ENCODE measurements at regions of chr18 and their contacts with region 1.

Region 1: DNA sequence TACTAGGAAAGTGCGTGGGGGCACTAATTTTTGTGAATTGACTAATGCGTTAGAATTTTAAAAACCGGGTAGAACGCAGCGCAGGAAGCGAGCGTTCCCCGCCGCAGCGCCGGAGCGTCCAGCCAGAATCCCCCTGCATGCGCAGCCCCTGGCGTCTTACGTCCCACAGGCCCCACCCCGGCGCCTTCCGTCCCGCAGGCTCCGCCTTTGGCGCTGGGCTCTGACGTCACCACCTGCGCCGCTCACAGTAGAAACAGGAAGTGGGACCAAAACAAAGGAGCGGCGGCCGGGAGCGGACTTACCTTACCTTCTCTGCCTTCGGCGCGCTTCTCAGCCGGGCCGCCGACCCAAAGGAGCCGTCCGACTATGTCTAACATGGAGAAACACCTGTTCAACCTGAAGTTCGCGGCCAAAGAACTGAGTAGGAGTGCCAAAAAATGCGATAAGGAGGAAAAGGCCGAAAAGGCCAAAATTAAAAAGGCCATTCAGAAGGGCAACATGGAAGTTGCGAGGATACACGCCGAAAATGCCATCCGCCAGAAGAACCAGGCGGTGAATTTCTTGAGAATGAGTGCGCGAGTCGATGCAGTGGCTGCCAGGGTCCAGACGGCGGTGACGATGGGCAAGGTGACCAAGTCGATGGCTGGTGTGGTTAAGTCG is at the start of gene CHMP1B:
- DNase-seq: peak; percentile 98
- ATAC-seq: peak; percentile 91
- H3K4me3 Mint-ChIP-seq: peak within 1 kb of the TSS; percentile 100
- H3K27ac Mint-ChIP-seq: peak within 1 kb of the TSS; percentile 100
- H3K4me1 Mint-ChIP-seq: peaks cover 28% of the 10 kb centered on the region
- H3K27me3 Mint-ChIP-seq: peaks cover 5% of the 10 kb centered on the region
- total RNA-seq, gene CHMP1B: 21.1 to 22.8 TPM

Region 2: GRCh38 chr18:11880586-11881304 is 29.5 kb after region 1 on chr18:
- CTCF ChIA-PET with region 1: no interaction called
- POLR2A ChIA-PET with region 1: no interaction called
- DNase-seq: no peak
- ATAC-seq: no peak
- H3K4me3 Mint-ChIP-seq: no peak overlapping the region
- H3K27ac Mint-ChIP-seq: no peak overlapping the region
- H3K4me1 Mint-ChIP-seq: no peaks in the 10 kb centered on the region
- H3K27me3 Mint-ChIP-seq: no peaks in the 10 kb centered on the region

Region 3: GRCh38 chr18:11908182-11909060 is 57.1 kb after region 1 on chr18 and contains the start of gene MPPE1:
- CTCF ChIA-PET with region 1: no interaction called
- POLR2A ChIA-PET with region 1: interaction called, 10 read pairs
- DNase-seq: peak; percentile 89
- ATAC-seq: peak; percentile 94
- H3K4me3 Mint-ChIP-seq: peak within 1 kb of the TSS; percentile 94
- H3K27ac Mint-ChIP-seq: peak within 1 kb of the TSS; percentile 93
- H3K4me1 Mint-ChIP-seq: peaks cover 30% of the 10 kb centered on the region
- H3K27me3 Mint-ChIP-seq: no peaks in the 10 kb centered on the region
- total RNA-seq, gene MPPE1: 40.0 to 41.6 TPM